Panc1 (cell line): ENCODE measurements at regions of chr6 and their contacts with region 1.

Region 1: DNA sequence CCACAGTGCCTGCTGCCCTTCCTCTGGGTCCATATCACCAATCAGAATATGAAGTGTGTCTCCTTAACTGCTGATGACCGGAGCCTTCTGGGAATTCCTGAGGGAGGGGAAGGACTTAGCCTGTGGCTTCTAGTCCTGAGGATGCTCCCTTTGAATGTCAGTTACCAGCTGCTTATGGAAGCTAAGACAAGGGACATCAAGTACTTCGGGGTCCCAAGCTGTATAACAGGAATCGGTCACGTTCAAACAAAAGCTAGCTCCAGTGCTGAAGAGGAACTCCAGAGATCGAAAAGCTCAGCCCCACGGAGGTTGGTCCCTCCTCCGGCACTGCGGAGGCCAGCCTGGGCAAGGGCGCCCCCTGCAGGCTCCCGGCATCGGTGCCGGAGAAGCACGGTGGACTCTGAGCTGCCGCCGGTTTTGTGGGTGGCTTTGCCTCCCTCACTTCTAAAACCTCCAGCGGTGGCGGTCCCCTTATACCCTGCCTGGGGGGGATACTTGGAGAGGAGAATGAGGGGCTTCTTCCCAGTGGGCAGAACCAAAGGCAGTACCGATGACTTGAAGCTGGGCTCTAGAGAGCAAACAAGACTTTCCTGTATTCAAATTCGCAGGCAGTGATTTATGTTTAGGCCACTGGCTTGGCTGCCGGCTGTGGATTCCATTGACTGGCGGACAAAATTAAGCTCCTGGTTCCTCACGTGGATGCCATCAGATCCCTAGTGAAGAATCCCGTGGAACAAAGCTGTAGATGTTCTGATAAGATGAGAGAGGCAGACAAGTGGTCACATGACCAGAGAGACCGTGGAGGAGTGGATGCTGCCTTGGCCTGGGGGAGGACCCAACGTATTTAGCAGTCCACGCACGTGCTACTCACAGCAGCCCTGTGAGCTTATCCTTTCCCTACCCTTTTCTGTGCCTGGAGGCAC is 16.2 kb upstream of the UBR2 start:
- DNase-seq: peak; percentile 70
- ATAC-seq: peak; percentile 99
- H3K4me3 ChIP-seq: peak overlapping the region; percentile 47 to 71
- H3K27ac ChIP-seq: peak overlapping the region; percentile 75
- H3K4me1 ChIP-seq: peaks cover 13% of the 10 kb centered on the region
- H3K27me3 ChIP-seq: no peaks in the 10 kb centered on the region
- CTCF ChIP-seq: peak; percentile 99

Region 2: GRCh38 chr6:41028629-41029412 is 1518.8 kb before region 1 on chr6:
- CTCF ChIA-PET with region 1: no interaction called
- POLR2A ChIA-PET with region 1: no interaction called
- in situ Hi-C with region 1: no loop called
- intact Hi-C with region 1: no loop called
- DNase-seq: no peak
- ATAC-seq: no peak
- H3K4me3 ChIP-seq: no peak overlapping the region
- H3K27ac ChIP-seq: peak overlapping the region; percentile 91
- H3K4me1 ChIP-seq: peaks cover 19% of the 10 kb centered on the region
- H3K27me3 ChIP-seq: no peaks in the 10 kb centered on the region
- CTCF ChIP-seq: no peak

Region 3: GRCh38 chr6:42260972-42261371 is 286.7 kb before region 1 on chr6:
- CTCF ChIA-PET with region 1: interaction called, 16 read pairs
- POLR2A ChIA-PET with region 1: no interaction called
- in situ Hi-C with region 1: no loop called
- intact Hi-C with region 1: no loop called
- DNase-seq: no peak
- ATAC-seq: peak; percentile 73
- H3K4me3 ChIP-seq: no peak overlapping the region
- H3K27ac ChIP-seq: peak overlapping the region; percentile 52
- H3K4me1 ChIP-seq: peaks cover 9% of the 10 kb centered on the region
- H3K27me3 ChIP-seq: no peaks in the 10 kb centered on the region
- CTCF ChIP-seq: peak; percentile 84